Endothelial cell of umbilical vein (primary cell): ENCODE measurements at regions of chr1 and their contacts with region 1.

Region 1: DNA sequence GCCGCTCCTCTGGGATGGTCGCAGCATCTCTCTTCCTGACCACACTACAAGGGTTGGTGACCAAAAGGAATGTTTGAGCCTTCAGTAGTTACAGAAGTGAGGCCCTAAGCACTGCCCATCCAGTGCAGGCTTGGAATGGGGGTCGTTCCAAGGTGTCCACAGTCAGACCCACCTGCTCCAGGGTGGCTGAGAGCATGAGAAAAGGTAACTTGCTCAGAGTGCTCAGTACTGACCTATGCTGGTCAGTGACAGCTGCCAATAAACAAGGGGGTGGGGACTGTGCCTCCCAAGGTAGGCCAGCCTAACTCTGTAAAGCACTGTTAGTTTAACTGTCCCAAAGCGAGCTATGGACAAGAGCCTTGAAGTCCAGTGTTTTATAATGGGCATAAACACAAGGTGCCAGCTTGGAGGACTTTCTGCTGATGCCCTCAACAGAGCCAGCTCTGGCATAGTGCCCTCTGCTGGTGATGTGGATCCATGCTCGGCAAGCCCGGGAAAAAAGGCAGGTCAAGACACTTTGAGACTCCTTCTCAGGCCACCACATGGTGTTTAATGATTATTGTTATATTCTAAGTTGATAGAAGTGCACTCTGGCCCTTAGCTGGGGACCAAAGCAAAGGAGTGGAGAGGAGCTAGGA is 78.1 kb upstream of the DNAH14 start:
- DNase-seq: peak; percentile 50
- H3K4me3 ChIP-seq: no peak overlapping the region
- H3K27ac ChIP-seq: no peak overlapping the region
- H3K4me1 ChIP-seq: no peaks in the 10 kb centered on the region
- H3K27me3 ChIP-seq: no peaks in the 10 kb centered on the region
- CTCF ChIP-seq: peak; percentile 75 to 83
- POLR2A ChIP-seq: no peak

Region 2: DNA sequence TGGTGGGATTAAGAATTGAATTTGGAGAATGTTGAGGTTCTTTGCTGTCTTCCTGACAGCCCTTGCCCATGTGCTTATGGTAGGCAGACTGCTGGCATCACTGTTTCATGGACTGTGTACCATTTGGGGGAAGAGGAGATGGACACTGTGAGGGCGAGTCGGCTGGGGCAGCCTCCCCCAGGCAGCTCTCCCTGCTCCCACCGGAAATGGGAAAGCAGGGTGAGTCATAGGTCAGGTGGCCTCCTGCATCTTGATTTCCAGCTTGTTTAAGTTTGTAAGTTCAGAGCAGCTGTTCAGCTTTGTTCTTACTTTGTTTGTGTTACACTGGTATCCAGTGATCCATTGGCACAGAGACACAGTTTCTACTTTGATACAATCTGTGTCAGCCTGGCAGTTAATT is 322.4 kb before region 1 on chr1:
- CTCF ChIA-PET with region 1: interaction called, 11 read pairs
- POLR2A ChIA-PET with region 1: no interaction called
- dilution Hi-C with region 1: no loop called
- intact Hi-C with region 1: no loop called
- DNase-seq: peak; percentile 84
- H3K4me3 ChIP-seq: no peak overlapping the region
- H3K27ac ChIP-seq: no peak overlapping the region
- H3K4me1 ChIP-seq: peaks cover 15% of the 10 kb centered on the region
- H3K27me3 ChIP-seq: no peaks in the 10 kb centered on the region
- CTCF ChIP-seq: no peak
- POLR2A ChIP-seq: no peak

Region 3: DNA sequence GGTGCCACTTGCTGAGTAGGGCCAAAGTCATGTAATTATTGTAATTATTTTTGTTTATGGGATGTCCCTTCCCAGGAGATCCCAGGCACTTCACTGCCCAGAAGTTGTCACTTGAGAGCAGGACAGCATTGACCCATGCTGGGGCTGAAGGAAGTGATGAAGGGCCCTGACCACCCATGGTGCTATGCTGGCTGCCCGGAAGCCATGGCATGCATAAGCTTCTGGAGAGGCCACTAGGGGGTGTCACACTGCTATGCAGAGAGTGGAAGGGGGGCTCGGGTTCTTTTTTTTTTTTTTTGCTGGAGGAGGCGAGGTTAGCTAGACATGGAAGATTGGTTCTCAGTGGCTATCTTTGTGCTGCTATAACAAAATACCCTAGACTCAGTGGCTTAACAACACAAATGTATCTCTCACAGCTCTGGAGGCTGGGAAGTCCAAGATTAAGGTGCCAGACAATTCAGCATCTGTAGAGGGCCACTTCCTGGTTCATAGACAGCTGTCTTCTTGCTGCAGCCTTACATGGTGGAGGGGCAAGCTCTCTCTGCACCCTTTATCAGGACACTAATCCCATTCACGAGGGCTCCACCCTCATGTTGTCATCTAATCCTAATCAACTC is 150.3 kb before region 1 on chr1:
- CTCF ChIA-PET with region 1: interaction called, 11 read pairs
- POLR2A ChIA-PET with region 1: no interaction called
- dilution Hi-C with region 1: no loop called
- intact Hi-C with region 1: loop called (anchors 1 kb)
- DNase-seq: no peak
- H3K4me3 ChIP-seq: no peak overlapping the region
- H3K27ac ChIP-seq: no peak overlapping the region
- H3K4me1 ChIP-seq: no peaks in the 10 kb centered on the region
- H3K27me3 ChIP-seq: no peaks in the 10 kb centered on the region
- CTCF ChIP-seq: peak; percentile 20 to 35
- POLR2A ChIP-seq: no peak

Region 4: GRCh38 chr1:224872832-224873433 is 21.6 kb after region 1 on chr1:
- CTCF ChIA-PET with region 1: interaction called, 10 read pairs
- POLR2A ChIA-PET with region 1: no interaction called
- dilution Hi-C with region 1: no loop called
- intact Hi-C with region 1: no loop called
- DNase-seq: no peak
- H3K4me3 ChIP-seq: no peak overlapping the region
- H3K27ac ChIP-seq: no peak overlapping the region
- H3K4me1 ChIP-seq: no peaks in the 10 kb centered on the region
- H3K27me3 ChIP-seq: peaks cover 0 to 4% of the 10 kb centered on the region in 2 experiments
- CTCF ChIP-seq: no peak
- POLR2A ChIP-seq: no peak

Region 5: DNA sequence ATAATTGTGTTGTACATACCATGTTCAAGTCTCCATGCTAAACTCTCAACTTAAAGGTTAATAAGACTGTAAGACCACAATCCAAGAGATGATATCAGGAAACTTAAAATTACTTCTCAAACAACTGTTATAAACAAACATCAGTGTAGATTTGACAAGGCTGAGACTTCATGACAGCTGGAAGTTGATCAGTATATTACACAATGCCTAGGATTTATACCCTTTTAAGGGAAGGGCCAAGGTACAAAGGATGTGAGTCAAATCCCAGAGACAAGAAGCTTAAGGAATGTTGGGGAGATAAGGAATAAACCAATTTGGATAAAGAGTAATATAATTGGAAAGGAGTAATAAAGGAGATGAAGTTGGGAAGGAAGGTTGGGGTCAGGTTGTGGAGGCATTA is 477.7 kb after region 1 on chr1:
- CTCF ChIA-PET with region 1: no interaction called
- POLR2A ChIA-PET with region 1: no interaction called
- dilution Hi-C with region 1: no loop called
- intact Hi-C with region 1: no loop called
- DNase-seq: peak; percentile 33
- H3K4me3 ChIP-seq: no peak overlapping the region
- H3K27ac ChIP-seq: no peak overlapping the region
- H3K4me1 ChIP-seq: no peaks in the 10 kb centered on the region
- H3K27me3 ChIP-seq: no peaks in the 10 kb centered on the region
- CTCF ChIP-seq: no peak
- POLR2A ChIP-seq: no peak

Region 6: DNA sequence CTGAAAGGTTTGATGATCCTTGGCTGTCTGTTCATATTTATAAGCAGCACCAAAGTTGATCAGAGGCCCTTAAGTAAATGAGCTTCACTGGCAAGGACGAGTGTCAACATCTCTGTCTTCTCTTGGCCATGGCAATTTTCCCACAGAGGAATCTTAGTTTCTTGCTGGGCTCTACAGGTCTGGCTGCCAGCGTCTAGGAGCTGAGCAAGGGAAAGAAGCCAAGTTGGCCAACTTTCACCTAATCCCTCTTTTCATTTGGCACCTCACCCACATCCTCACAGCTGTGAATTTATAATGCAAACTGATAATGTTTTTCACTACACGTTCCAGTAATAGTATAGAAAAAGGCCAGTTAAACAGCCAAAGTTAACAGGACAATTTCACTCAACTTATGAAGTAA is 675.5 kb after region 1 on chr1:
- CTCF ChIA-PET with region 1: no interaction called
- POLR2A ChIA-PET with region 1: no interaction called
- dilution Hi-C with region 1: no loop called
- intact Hi-C with region 1: no loop called
- DNase-seq: no peak
- H3K4me3 ChIP-seq: no peak overlapping the region
- H3K27ac ChIP-seq: no peak overlapping the region
- H3K4me1 ChIP-seq: no peaks in the 10 kb centered on the region
- H3K27me3 ChIP-seq: no peaks in the 10 kb centered on the region
- CTCF ChIP-seq: no peak
- POLR2A ChIP-seq: no peak